Right cardiac atrium (tissue), 5 donors: ENCODE measurements at regions of chr6 and their contacts with region 1.

Region 1: DNA sequence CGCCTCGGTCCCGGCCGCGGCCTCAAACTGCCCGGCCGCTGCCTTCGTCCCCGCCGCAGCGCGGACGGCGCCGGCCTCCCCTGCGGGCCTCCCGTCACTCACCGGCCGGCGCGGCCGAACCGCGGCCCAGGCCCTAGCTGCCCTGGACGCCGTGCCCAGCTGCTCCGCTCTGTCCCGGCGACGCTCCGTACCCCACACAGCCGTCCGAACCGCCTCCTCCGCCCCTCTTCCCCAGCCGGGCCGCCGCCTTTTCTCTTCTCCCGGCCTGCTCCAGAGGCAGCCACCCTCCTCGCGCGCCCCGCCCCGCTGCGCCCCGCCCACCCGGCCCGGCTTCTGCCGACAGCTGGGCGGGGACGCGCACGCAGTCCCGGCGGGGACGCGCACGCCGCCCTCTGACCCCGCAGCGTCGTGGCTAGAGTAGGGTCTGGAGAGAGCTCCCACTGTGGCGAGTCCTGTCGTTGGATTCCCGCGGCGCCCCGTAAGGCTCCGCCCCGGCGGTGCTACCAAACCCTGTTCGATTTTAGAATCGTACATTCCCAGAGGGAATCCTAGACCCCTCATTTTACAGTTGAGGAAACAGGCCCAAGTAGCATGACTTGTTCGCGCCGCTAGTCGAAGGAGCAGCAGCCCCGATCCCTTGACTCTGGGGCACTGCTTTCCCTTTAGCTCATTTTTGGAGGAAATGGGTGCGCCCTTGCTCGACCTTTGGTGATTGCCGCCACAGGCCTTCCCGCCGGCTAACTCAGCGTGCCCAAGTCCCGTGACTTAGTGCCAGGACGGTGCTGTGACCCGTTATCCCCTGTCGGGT is at the start of gene FBXO30:
- DNase-seq: peak; percentile 89 to 97 (median 96)
- ATAC-seq: peak; percentile 98 to 99
- H3K4me3 ChIP-seq: peak within 1 kb of the TSS; percentile 73
- H3K27ac ChIP-seq: peak within 1 kb of the TSS; percentile 96
- H3K4me1 ChIP-seq: peaks cover under 1% of the 10 kb centered on the region
- H3K27me3 ChIP-seq: no peaks in the 10 kb centered on the region
- total RNA-seq, gene FBXO30: 12.7 to 14.0 (median 13.4) TPM

Region 2: GRCh38 chr6:145502416-145502815 is 312.3 kb before region 1 on chr6:
- intact Hi-C with region 1: no loop called
- DNase-seq: no peak
- ATAC-seq: no peak
- H3K4me3 ChIP-seq: no peak overlapping the region
- H3K27ac ChIP-seq: no peak overlapping the region
- H3K4me1 ChIP-seq: no peaks in the 10 kb centered on the region
- H3K27me3 ChIP-seq: no peaks in the 10 kb centered on the region

Region 3: DNA sequence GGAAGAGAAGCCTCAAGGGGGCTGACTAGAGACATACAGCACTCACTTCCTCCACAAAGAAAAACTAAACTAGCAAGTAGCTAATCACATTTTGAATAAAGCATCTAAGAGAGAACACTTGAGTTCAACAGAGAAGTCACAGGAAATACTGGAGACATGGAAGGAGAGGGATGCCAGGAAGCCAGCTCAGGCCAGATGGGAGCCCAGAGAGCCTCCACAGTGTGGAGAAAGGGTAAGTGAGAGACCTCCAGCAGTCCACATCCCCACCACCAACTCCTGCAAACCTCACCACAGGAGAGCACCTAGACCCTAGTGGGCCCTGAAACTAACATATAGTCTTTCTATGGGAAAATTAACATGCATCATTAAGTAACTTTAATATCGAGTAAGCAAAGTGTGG is 158.6 kb before region 1 on chr6:
- intact Hi-C with region 1: no loop called
- DNase-seq: peak in 1 of 3 donors; percentile 33
- ATAC-seq: peak in 1 of 2 donors; percentile 59
- H3K4me3 ChIP-seq: no peak overlapping the region
- H3K27ac ChIP-seq: no peak overlapping the region
- H3K4me1 ChIP-seq: peaks cover 2% of the 10 kb centered on the region
- H3K27me3 ChIP-seq: no peaks in the 10 kb centered on the region

Region 4: GRCh38 chr6:145734486-145735355 is 80.0 kb before region 1 on chr6:
- intact Hi-C with region 1: loop called in 2 of 4 experiments (anchors 5 kb)
- DNase-seq: peak; percentile 95 to 98 (median 96)
- ATAC-seq: peak; percentile 95
- H3K4me3 ChIP-seq: peak overlapping the region; percentile 67
- H3K27ac ChIP-seq: peak overlapping the region; percentile 99
- H3K4me1 ChIP-seq: no peaks in the 10 kb centered on the region
- H3K27me3 ChIP-seq: no peaks in the 10 kb centered on the region

Region 5: GRCh38 chr6:145749632-145750031 is 65.1 kb before region 1 on chr6:
- intact Hi-C with region 1: no loop called
- DNase-seq: no peak
- ATAC-seq: peak in 1 of 2 donors; percentile 19
- H3K4me3 ChIP-seq: no peak overlapping the region
- H3K27ac ChIP-seq: no peak overlapping the region
- H3K4me1 ChIP-seq: no peaks in the 10 kb centered on the region
- H3K27me3 ChIP-seq: no peaks in the 10 kb centered on the region

Region 6: DNA sequence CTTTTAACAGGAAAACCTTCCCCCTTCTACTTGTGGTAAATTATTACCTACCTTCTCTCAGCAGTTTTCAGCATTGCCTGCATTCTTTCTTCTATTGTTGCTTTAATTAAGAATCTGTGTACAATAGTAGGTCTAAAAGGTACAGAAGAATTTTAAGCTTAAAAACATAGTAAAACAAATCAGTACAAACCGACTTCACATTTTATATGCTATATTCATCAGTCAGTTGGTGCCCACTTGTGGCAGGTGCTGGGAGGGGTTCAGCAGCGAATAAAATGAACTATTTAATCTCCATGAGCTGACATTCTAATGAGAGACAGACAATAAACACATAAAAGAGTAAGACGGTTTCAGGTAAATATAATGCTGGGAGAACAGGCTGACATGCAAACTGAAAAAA is 73.3 kb after region 1 on chr6:
- intact Hi-C with region 1: loop called in 1 of 4 experiments (anchors 10 kb)
- DNase-seq: peak in 1 of 3 donors; percentile 34
- ATAC-seq: peak in 1 of 2 donors; percentile 50
- H3K4me3 ChIP-seq: no peak overlapping the region
- H3K27ac ChIP-seq: no peak overlapping the region
- H3K4me1 ChIP-seq: no peaks in the 10 kb centered on the region
- H3K27me3 ChIP-seq: no peaks in the 10 kb centered on the region